ENCODE measurements at regions of chrX and their contacts with region 1.

Region 1: DNA sequence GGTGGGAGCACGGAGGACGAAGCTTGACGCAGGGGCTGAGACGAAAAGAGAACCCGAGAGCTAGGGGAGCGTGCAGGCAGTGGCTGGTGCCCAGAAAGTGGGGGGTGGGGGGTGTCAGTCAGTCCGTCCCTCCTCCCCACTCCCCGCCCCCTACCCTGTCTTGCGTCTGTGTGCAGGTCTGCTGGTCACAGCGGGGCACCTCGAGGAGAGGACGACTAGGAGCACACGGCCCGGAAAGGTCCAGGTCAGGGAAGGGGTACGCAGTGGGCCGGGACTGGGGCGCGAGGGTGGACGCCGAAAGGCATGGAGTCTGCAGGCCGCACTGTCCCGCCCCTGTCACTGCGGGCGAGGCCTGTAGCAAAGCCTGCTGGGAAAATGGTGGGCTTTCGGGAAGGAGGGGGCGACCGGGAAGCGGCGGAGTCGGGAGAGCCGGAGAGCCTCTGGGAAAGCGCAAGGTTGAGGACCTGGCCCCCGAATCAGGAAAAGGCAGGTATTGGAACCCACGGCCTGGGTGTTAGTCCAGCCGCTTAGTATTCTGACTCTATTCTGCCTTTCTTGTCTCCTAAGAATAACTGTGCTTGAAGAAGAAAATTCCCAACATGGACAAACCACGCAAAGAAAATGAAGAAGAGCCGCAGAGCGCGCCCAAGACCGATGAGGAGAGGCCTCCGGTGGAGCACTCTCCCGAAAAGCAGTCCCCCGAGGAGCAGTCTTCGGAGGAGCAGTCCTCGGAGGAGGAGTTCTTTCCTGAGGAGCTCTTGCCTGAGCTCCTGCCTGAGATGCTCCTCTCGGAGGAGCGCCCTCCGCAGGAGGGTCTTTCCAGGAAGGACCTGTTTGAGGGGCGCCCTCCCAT is 769 bp downstream of the TCEAL1 start:
- DNase-seq: peak; percentile 20
- H3K4me3 ChIP-seq: peak overlapping the region; percentile 71
- H3K27ac ChIP-seq: peak overlapping the region; percentile 77
- H3K27me3 ChIP-seq: no peaks in the 10 kb centered on the region
- CTCF ChIP-seq: peak; percentile 64

Region 2: GRCh38 chrX:103616676-103617186 is 12.8 kb before region 1 on chrX:
- CTCF ChIA-PET with region 1: interaction called, 12 read pairs
- POLR2A ChIA-PET with region 1: no interaction called
- DNase-seq: no peak
- H3K4me3 ChIP-seq: no peak overlapping the region
- H3K27ac ChIP-seq: no peak overlapping the region
- H3K27me3 ChIP-seq: no peaks in the 10 kb centered on the region
- CTCF ChIP-seq: no peak

Region 3: GRCh38 chrX:103651151-103651783 is 21.7 kb after region 1 on chrX:
- CTCF ChIA-PET with region 1: interaction called, 15 read pairs
- POLR2A ChIA-PET with region 1: no interaction called
- DNase-seq: no peak
- H3K4me3 ChIP-seq: no peak overlapping the region
- H3K27ac ChIP-seq: no peak overlapping the region
- H3K27me3 ChIP-seq: no peaks in the 10 kb centered on the region
- CTCF ChIP-seq: no peak

Region 4: DNA sequence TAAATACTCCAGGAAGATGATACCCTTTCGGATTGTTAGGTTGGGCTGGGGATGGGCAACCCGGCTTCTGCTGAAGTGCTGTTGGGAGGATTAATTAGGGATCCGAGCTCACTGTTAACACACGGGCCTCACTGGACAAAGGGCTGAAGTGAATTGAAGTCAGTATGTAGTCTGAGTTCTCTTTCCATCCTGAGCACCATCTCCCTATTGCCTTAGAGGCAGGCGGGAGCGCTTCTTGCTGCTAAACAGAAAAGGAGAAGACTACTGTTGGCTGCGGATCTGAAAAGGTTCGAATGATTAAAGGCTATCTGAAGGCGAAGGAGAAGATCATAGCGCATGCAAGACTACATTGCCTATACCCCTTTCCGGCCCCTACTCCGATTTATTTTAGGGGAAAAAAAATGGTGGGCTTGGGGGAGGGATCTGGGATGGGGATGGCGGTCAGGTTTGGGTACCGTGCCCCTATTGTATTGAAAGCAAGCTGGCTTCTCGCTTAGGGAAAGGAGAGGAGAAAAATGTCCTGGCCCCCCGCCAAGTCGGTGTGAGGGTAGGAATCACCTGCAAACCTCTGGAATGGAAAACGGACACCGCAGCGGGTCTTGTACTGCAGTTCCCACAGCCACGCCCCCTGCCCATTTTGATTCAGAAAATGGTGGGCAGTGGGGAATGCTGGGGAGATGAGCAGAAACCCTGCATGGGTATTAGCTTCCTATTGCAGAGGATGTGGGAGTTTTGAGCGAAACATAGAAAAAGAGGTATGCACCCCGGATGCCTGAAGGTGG is 34.6 kb after region 1 on chrX:
- CTCF ChIA-PET with region 1: interaction called, 12 read pairs
- POLR2A ChIA-PET with region 1: no interaction called
- DNase-seq: no peak
- H3K4me3 ChIP-seq: no peak overlapping the region
- H3K27ac ChIP-seq: no peak overlapping the region
- H3K27me3 ChIP-seq: no peaks in the 10 kb centered on the region
- CTCF ChIP-seq: no peak

Region 5: DNA sequence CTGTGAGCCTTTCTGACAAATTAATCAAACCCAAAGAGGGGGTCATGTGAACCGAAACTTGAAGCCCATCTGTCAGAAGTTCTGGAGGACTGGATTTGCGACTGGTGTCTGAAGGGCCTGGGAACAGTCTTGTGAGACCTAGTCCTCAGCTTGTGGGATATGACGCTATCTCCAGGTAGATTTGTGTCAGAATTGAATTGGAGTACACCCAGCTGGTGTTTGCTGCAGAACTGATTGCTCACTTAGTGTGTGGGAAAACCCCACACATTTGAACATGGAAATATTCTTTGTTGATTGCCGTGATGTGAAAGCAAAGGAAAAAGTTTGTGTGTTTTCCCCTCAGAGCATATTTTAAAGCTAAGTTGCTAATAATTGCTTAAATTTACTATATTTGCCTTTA is 302.6 kb after region 1 on chrX:
- CTCF ChIA-PET with region 1: no interaction called
- POLR2A ChIA-PET with region 1: no interaction called
- DNase-seq: no peak
- H3K4me3 ChIP-seq: no peak overlapping the region
- H3K27ac ChIP-seq: no peak overlapping the region
- H3K27me3 ChIP-seq: no peaks in the 10 kb centered on the region
- CTCF ChIP-seq: no peak

Measured in AG04450 (cell line).